PC-3 (cell line): ENCODE measurements at regions of chr2 and their contacts with region 1.

Region 1: DNA sequence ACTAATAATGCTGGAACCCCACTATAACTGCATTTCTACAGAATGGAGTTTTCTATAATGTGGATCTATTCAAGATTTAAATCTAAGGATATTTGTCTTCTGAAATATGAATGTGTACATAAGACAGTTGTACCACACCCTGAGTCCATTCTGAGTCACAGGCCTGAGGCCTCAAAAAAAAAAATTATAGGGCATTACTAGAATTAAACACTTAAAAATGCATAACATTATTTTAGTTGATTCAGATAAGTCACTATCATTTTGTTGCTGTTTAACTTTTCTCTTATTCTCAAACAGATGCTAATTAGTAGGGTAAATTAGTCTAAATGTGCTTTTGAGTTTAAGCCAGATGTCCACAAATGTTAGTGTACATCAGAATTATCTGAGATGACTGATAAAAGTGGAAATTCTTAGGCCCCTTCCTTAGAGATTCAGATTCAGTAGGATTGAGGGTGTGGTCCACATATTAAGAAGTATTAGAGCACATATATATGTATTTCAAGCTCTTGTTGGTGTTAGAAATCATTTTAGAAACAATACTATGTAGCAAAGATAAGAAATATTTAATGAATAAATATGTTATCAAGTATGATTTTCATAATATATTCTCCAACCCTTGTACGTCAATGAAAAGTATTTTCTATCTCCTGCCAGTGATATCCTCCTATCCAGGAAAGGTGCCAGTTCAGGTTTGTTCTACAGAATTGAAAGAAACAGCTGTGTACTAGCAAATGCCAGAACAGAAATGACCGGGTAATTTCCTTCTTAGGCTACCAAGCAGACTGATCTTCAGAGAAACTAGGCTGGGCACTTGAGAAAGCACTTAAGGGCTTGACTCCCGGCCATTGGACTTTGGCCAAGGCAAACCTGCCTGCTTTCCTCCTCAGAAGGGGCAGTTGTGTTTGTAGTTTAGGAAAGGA is 42.6 kb upstream of the COL5A2 start:
- DNase-seq: peak; percentile 94
- ATAC-seq: peak; percentile 42
- H3K4me3 ChIP-seq: peak overlapping the region; percentile 67
- H3K27ac ChIP-seq: peak overlapping the region; percentile 90
- H3K4me1 ChIP-seq: peaks cover 73% of the 10 kb centered on the region
- H3K27me3 ChIP-seq: no peaks in the 10 kb centered on the region
- CTCF ChIP-seq: no peak

Region 2: DNA sequence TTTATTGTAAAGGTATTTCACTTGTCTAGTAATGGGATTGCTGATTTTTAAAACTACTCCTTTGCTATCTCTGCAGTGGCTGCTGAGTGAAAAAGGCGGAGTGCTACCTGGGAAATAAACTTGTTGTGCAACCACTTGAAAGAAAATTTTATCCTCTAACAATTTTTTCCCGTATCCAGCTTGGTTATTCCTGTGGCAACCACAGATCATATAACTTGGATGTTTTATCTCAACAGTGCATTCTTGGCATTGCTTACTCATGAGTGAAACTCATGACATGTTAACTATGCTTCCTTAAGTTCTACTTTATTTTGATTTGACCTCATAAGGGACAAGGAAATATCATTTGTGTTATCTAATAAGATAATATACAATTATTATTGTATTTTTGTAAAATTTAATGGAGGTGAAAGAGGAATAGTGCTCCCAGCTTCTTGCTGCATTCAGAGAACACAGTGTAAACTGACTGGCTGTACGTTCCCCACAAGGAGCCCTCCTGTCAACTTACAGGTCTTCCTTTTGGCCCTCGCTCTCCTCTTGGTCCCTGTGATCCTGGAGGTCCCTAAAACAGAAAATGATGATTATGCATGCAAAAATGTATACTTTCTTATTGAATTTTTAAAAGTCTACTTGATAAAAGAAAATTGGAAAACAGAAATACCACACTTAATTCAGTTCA is 125.2 kb before region 1 on chr2:
- CTCF ChIA-PET with region 1: no interaction called
- POLR2A ChIA-PET with region 1: no interaction called
- intact Hi-C with region 1: loop called (anchors 2 kb)
- DNase-seq: peak; percentile 88
- ATAC-seq: peak; percentile 86
- H3K4me3 ChIP-seq: no peak overlapping the region
- H3K27ac ChIP-seq: peak overlapping the region; percentile 22
- H3K4me1 ChIP-seq: peaks cover 34% of the 10 kb centered on the region
- H3K27me3 ChIP-seq: no peaks in the 10 kb centered on the region
- CTCF ChIP-seq: no peak

Region 3: GRCh38 chr2:189124175-189124574 is 97.9 kb before region 1 on chr2:
- CTCF ChIA-PET with region 1: no interaction called
- POLR2A ChIA-PET with region 1: no interaction called
- intact Hi-C with region 1: loop called (anchors 1 kb)
- DNase-seq: peak; percentile 88
- ATAC-seq: peak; percentile 85
- H3K4me3 ChIP-seq: peak overlapping the region; percentile 22
- H3K27ac ChIP-seq: peak overlapping the region; percentile 91
- H3K4me1 ChIP-seq: peaks cover 49% of the 10 kb centered on the region
- H3K27me3 ChIP-seq: no peaks in the 10 kb centered on the region
- CTCF ChIP-seq: no peak

Region 4: DNA sequence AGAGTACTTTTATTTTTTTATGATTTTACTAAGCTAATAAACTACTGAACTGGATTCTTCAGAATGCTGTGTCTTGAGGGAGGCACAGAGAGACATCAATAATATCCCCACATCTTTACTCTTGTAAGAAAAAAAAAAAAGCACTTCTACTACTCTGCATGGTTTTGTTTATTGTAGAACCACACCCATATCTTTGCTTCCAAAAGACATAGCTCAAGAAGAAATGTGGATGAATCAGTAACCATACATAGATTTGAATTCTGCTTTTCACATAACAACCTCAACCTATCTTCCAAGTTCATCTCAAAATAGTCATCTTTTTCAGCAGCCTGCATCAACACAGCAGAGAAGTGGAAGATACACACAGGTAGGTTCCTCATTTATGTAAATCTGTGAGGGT is 30.3 kb before region 1 on chr2:
- CTCF ChIA-PET with region 1: no interaction called
- POLR2A ChIA-PET with region 1: interaction called, 3 read pairs
- intact Hi-C with region 1: loop called (anchors 1 kb)
- DNase-seq: peak; percentile 66
- ATAC-seq: peak; percentile 77
- H3K4me3 ChIP-seq: no peak overlapping the region
- H3K27ac ChIP-seq: 0 out of 2 replicates have a peak overlapping the region, but pooled peaks have one; percentile 8
- H3K4me1 ChIP-seq: peaks cover 20% of the 10 kb centered on the region
- H3K27me3 ChIP-seq: no peaks in the 10 kb centered on the region
- CTCF ChIP-seq: no peak

Region 5: DNA sequence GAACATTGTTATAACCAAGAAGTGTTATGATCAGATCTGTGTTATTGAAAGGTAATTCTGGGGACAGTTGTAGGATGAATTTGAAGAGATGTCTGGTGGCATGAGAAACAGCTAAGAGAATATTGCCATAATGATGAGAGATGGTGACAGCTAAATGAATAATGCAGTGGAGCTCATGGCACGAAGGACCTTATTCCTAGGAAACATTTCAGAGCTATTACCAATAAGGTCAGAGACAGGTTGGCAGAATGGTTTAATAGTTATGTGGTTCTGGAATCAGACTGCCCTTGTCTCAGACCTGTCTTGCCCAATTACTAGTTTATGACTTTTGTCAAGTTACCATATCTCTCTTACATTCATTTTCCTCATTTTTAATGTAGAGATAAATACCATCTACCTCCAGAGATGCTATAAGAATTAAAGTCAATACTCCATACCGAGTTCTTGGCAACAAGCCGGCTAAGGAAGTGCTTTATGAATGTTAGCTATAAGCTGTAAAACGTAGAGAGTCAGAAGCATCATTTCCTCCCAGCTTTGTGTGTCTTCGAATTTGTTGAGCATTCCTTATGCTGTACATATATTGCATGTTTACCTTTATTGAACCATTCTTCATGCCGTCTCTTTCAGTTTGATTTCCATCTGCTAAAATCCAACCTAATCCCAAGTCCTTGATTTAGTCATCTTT is 31.0 kb after region 1 on chr2:
- CTCF ChIA-PET with region 1: no interaction called
- POLR2A ChIA-PET with region 1: no interaction called
- intact Hi-C with region 1: loop called (anchors 1 kb)
- DNase-seq: peak; percentile 74
- ATAC-seq: peak; percentile 70
- H3K4me3 ChIP-seq: no peak overlapping the region
- H3K27ac ChIP-seq: peak overlapping the region; percentile 63
- H3K4me1 ChIP-seq: peaks cover 36% of the 10 kb centered on the region
- H3K27me3 ChIP-seq: no peaks in the 10 kb centered on the region
- CTCF ChIP-seq: no peak

Region 6: DNA sequence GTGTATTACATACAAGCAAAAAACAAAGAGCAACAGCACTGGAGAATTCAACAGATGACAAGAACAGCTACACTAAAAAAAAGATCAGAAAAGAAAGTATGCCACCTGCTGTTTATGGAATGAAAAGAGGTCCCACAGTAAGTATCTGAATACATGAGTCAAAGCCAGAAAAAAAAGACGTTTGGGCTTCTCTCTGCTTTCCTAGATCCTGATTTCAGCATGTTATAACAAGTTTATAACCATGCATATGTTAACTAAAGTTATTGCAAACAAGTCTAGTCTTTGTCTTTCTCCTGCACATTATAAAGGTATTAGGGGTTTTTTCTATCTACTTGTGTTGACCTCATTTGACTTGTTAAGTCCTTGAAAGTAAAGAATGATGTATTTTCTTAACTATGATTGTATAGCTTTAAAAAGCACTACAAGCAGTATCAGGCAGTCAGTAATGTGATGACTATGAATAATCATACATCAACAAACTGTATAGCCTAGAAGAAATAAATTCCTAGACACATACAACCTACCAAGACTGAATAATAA is 65.9 kb after region 1 on chr2:
- CTCF ChIA-PET with region 1: interaction called, 4 read pairs
- POLR2A ChIA-PET with region 1: interaction called, 6 read pairs
- intact Hi-C with region 1: loop called (anchors 1 kb)
- DNase-seq: peak; percentile 84
- ATAC-seq: peak; percentile 87
- H3K4me3 ChIP-seq: no peak overlapping the region
- H3K27ac ChIP-seq: peak overlapping the region; percentile 38
- H3K4me1 ChIP-seq: peaks cover 35% of the 10 kb centered on the region
- H3K27me3 ChIP-seq: no peaks in the 10 kb centered on the region
- CTCF ChIP-seq: peak; percentile 93

Region 7: GRCh38 chr2:189412330-189412953 is 190.3 kb after region 1 on chr2:
- CTCF ChIA-PET with region 1: interaction called, 3 read pairs
- POLR2A ChIA-PET with region 1: no interaction called
- intact Hi-C with region 1: loop called (anchors 5 kb)
- DNase-seq: peak; percentile 67
- ATAC-seq: peak; percentile 55
- H3K4me3 ChIP-seq: no peak overlapping the region
- H3K27ac ChIP-seq: peak overlapping the region; percentile 29; the same call in 1 of the 2 replicates
- H3K4me1 ChIP-seq: peaks cover 29% of the 10 kb centered on the region
- H3K27me3 ChIP-seq: no peaks in the 10 kb centered on the region
- CTCF ChIP-seq: peak; percentile 89